Activated CD4-positive, alpha-beta memory T cell treated with anti-CD3 and anti-CD28 coated beads for 36 hours (primary cell): ENCODE measurements at regions of chr20 and their contacts with region 1.

Region 1: GRCh38 chr20:8271727-8272126 is 139.7 kb downstream of the PLCB1 start:
- DNase-seq: no peak
- H3K4me3 Mint-ChIP-seq: no peak overlapping the region
- H3K27ac Mint-ChIP-seq: no peak overlapping the region
- H3K4me1 Mint-ChIP-seq: peaks cover 25% of the 10 kb centered on the region
- H3K27me3 Mint-ChIP-seq: peaks cover 5% of the 10 kb centered on the region

Region 2: DNA sequence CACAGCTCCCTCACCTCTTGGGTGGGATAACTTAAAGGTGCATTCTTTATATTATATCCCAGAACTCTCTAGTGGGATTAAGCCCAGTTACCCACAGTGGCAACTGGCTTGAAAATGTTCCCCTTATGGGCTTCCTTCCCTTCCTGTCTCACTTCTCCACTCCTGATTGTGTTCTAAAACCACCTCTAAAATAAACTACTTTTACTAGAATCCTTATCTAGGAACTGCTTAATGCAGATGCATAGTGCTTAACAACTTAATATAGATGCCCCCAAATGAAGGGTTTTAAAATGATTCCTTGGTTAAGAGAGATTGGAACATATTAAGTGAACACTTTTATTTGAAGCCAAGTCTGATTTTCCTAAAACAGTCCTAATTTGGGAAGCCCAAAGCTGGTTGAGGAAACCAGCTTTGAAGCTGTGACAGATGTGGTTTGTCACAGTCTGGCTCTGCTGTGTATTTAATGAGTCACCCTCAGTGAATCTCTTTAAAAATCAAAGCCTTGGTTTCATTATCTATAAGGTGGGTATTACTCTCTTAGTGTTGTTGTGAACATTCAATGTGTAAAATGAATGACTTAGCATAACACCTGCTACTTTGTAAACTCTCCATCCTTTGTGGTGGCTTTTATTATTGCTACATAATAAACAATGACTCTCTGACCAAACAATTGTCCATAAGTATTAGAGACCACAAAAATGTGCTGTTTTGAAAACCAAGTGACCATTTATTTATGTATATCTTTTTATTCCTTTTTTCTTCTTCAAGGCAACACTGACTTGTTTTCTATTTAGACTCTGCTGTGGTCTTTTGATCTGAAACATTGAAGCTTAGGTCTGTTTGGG is 115.3 kb before region 1 on chr20:
- CTCF ChIA-PET with region 1: no interaction called
- POLR2A ChIA-PET with region 1: no interaction called
- intact Hi-C with region 1: loop called (anchors 2 kb)
- DNase-seq: no peak
- H3K4me3 Mint-ChIP-seq: no peak overlapping the region
- H3K27ac Mint-ChIP-seq: no peak overlapping the region
- H3K4me1 Mint-ChIP-seq: peaks cover 53% of the 10 kb centered on the region
- H3K27me3 Mint-ChIP-seq: no peaks in the 10 kb centered on the region